Activated B cell treated with CpG ODN at 0.5 μM for 24 hours (primary cell): ENCODE measurements at regions of chr10 and their contacts with region 1.

Region 1: GRCh38 chr10:119207367-119207668 is at the start of gene GRK5:
- DNase-seq: peak; percentile 96
- ATAC-seq: peak; percentile 81
- H3K4me3 Mint-ChIP-seq: peak within 1 kb of the TSS; percentile 93
- H3K27ac Mint-ChIP-seq: peak within 1 kb of the TSS; percentile 95
- H3K4me1 Mint-ChIP-seq: peaks cover 40% of the 10 kb centered on the region
- H3K27me3 Mint-ChIP-seq: no peaks in the 10 kb centered on the region
- CTCF ChIP-seq: no peak
- total RNA-seq, gene GRK5: 19.9 and 21.3 TPM in 2 replicates

Region 2: DNA sequence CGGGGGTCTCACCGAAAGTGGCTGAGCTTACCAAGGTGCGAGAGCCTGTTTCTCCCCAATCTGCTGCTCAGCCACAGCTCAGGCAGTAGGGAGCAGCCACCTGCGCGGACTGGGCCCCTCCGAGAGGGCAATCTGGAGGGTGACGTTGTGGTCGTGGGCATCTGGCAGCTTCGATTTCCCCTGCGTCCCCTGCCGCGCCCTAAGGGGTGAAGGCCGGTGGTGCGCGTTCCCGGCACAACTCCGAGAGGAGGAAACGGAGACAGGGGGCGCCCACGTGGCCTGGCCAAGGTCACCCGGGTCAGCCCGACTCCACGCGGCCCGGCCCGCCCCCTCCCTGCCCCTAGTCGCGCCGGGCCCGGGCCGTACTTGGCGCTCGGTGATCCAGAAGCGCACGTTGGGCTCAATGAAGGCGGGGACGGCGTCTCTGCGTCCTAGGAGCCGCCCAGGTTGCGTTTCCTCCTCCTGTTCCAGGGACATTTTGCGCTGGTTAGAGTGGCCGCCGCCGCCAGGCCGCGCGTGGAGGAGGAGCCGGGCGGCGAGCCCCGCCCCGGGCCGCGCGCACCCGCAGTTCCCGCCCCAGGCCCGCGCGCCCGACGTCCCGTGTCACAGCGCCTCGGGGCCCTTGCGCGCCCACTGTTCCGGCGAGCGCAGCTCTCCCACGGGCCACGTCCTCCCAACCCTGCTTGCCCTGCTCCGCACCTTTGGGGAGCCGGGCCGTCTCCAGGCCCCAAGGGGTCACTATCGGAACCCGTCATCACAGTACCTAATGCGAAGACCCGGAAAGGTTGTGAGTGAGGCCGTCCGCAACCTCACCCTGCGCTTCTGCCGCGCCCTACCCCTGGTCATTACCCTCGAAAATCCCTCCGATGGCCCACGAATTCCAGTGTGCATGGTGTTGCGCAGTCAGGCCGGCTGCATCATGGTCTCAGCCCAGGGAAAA is 41.9 kb before region 1 on chr10 and contains the start of gene SFXN4:
- CTCF ChIA-PET with region 1: interaction called, 7 read pairs
- POLR2A ChIA-PET with region 1: interaction called, 5 read pairs
- intact Hi-C with region 1: loop called (anchors 1 kb)
- DNase-seq: peak; percentile 83
- ATAC-seq: peak; percentile 93
- H3K4me3 Mint-ChIP-seq: peak within 1 kb of the TSS; percentile 92
- H3K27ac Mint-ChIP-seq: peak within 1 kb of the TSS; percentile 88
- H3K4me1 Mint-ChIP-seq: peaks cover 18% of the 10 kb centered on the region
- H3K27me3 Mint-ChIP-seq: no peaks in the 10 kb centered on the region
- CTCF ChIP-seq: no peak
- total RNA-seq, gene SFXN4: 18.4 and 21.7 TPM in 2 replicates

Region 3: DNA sequence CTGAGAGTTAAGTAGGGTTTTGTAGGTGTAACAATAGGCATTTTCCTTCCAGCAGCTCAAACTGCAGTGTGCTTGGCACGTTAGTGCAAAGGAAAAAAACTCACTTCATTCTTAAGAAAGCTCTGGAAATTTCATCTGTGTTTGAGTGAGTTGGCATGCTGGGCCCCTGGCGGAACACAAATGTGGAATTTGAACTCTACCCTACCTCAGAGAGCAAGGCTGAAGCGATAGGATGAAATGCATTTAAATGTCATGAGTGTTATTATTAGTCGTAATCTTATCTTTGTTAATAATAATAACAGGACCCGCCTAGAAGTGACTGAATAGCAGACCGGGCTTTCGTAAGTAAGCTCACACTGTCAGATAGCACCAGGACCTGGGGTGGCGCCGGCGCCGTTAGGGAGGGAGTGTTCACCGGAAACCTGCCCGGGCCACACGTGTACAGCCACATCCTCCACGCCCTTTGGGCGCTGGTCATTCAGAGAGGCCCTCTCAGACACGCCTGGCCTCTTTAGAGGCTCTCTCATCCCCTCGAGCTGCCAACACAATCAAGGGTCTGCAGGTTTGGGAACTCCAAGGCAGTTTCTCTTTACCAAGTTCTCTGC is 63.5 kb after region 1 on chr10:
- CTCF ChIA-PET with region 1: interaction called, 11 read pairs
- POLR2A ChIA-PET with region 1: interaction called, 18 read pairs
- intact Hi-C with region 1: loop called (anchors 1 kb)
- DNase-seq: peak; percentile 45
- ATAC-seq: peak; percentile 49
- H3K4me3 Mint-ChIP-seq: peak overlapping the region; percentile 69
- H3K27ac Mint-ChIP-seq: peak overlapping the region; percentile 96
- H3K4me1 Mint-ChIP-seq: peaks cover 87% of the 10 kb centered on the region
- H3K27me3 Mint-ChIP-seq: no peaks in the 10 kb centered on the region
- CTCF ChIP-seq: no peak

Region 4: DNA sequence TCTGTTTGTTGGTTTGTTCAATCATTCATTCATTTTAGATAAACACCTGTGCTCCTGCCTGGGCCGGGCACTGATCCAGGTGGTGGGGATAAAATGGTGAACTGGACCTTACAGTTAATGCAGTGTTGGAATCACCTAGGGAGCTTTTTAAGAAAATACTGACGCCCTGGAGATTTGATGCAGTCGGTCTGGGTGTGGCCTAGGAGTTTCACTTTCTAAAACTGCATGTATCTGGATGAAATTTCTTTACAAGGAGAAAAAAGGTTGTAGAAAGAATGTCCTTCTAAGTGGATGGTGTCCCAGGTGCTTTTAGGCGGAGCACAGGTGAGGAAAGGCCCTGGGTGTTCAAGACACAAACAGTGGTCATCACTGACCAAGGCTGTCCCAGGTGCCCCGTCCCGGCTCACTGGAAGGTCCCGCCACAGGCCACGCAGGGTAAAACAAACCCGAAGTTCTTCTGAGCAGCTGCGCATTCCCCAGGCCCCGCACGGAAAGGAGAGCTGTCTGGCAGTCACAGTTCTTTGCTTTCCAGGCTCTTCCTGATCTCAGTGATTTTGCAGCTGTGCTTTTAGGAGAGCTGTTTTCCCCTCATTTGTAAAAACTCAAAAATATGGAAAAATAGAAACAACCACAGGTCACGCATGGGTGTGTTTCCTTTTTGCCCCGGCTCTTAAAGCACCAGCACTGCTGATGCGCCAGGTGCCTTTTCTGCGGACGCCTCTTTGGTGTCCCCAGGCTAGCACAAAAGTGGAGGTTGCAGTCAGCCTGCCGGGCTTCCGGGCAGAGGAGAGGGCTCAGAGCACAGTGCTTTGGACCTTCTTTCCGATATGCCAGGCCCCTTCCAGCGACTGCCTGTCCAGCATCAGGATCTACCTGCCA is 161.9 kb after region 1 on chr10:
- CTCF ChIA-PET with region 1: interaction called, 11 read pairs
- POLR2A ChIA-PET with region 1: interaction called, 4 read pairs
- intact Hi-C with region 1: loop called (anchors 1 kb)
- DNase-seq: peak; percentile 46
- ATAC-seq: peak; percentile 72
- H3K4me3 Mint-ChIP-seq: peak overlapping the region; percentile 87
- H3K27ac Mint-ChIP-seq: peak overlapping the region; percentile 98
- H3K4me1 Mint-ChIP-seq: peaks cover 66% of the 10 kb centered on the region
- H3K27me3 Mint-ChIP-seq: no peaks in the 10 kb centered on the region
- CTCF ChIP-seq: no peak

Region 5: DNA sequence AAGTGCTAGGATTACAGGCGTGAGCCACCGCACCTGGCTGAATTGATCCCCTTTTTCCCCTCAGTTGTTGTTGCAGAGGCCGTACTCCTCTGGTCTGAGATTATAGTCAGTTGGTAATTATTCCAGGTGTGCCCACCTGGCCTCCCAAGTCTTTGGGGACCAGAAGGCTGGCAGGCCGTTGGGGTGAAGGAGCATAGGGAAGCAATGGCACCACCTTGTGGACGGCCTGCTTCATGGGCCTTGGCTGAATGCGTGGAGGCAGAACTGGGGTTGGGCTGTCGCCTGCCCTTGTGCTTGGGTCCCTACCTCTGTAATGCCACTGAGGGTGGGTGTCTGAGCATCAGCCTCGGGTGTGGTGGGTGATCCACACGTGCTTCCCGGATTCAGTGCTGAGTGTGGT is 209.5 kb after region 1 on chr10:
- CTCF ChIA-PET with region 1: interaction called, 80 read pairs
- POLR2A ChIA-PET with region 1: interaction called, 15 read pairs
- intact Hi-C with region 1: loop called (anchors 1 kb)
- DNase-seq: peak; percentile 57
- ATAC-seq: peak; percentile 92
- H3K4me3 Mint-ChIP-seq: no peak overlapping the region
- H3K27ac Mint-ChIP-seq: no peak overlapping the region
- H3K4me1 Mint-ChIP-seq: peaks cover 2% of the 10 kb centered on the region
- H3K27me3 Mint-ChIP-seq: no peaks in the 10 kb centered on the region
- CTCF ChIP-seq: peak; percentile 22

Region 6: DNA sequence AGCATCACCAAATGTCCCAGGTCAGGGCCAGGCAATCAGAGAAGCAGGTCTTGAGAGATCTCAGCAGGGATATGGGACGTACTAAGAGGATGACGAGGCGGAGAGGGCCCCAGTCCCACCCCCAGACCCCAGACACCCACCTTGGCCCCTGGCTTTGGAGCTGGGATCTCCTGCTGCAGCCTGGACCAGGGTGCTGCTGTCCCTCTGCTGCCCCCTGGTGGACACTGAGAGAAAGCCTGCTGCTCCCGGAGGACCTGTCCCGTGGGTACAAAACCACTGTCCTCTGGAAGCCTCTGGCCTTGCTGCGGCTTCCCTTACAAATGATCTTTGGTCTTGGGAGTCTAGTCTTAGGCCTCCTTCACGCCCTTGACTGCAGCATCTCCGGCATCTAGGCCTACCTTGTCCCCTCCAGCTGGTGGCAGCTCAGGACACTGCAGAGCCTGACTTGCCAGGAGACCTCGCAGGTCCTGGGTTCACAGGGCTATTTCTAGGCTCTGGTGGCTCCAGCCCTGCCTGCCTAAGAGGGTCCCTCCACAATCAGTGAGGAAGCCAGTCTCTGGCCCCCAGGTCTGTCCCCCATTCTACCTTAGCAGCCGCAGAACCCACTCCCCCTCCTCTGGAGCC is 238.1 kb after region 1 on chr10:
- CTCF ChIA-PET with region 1: interaction called, 47 read pairs
- POLR2A ChIA-PET with region 1: interaction called, 8 read pairs
- intact Hi-C with region 1: loop called (anchors 1 kb)
- DNase-seq: peak; percentile 74
- ATAC-seq: peak; percentile 70
- H3K4me3 Mint-ChIP-seq: no peak overlapping the region
- H3K27ac Mint-ChIP-seq: peak overlapping the region; percentile 61
- H3K4me1 Mint-ChIP-seq: peaks cover 31% of the 10 kb centered on the region
- H3K27me3 Mint-ChIP-seq: no peaks in the 10 kb centered on the region
- CTCF ChIP-seq: peak; percentile 57

Region 7: GRCh38 chr10:119489991-119490326 is 282.6 kb after region 1 on chr10:
- CTCF ChIA-PET with region 1: interaction called, 127 read pairs
- POLR2A ChIA-PET with region 1: interaction called, 37 read pairs
- intact Hi-C with region 1: loop called (anchors 1 kb)
- DNase-seq: no peak
- ATAC-seq: no peak
- H3K4me3 Mint-ChIP-seq: peak overlapping the region; percentile 86
- H3K27ac Mint-ChIP-seq: peak overlapping the region; percentile 86
- H3K4me1 Mint-ChIP-seq: peaks cover 15% of the 10 kb centered on the region
- H3K27me3 Mint-ChIP-seq: no peaks in the 10 kb centered on the region
- CTCF ChIP-seq: no peak